Calu3 (cell line): ENCODE measurements at regions of chr7 and their contacts with region 1.

Region 1: GRCh38 chr7:126803060-126803665 is 449.6 kb downstream of the GRM8 start:
- DNase-seq: peak; percentile 73
- H3K4me3 Mint-ChIP-seq: no peak overlapping the region
- H3K27ac Mint-ChIP-seq: no peak overlapping the region
- H3K4me1 Mint-ChIP-seq: no peaks in the 10 kb centered on the region
- H3K27me3 Mint-ChIP-seq: peaks cover 32% of the 10 kb centered on the region
- CTCF ChIP-seq: peak; percentile 49

Region 2: DNA sequence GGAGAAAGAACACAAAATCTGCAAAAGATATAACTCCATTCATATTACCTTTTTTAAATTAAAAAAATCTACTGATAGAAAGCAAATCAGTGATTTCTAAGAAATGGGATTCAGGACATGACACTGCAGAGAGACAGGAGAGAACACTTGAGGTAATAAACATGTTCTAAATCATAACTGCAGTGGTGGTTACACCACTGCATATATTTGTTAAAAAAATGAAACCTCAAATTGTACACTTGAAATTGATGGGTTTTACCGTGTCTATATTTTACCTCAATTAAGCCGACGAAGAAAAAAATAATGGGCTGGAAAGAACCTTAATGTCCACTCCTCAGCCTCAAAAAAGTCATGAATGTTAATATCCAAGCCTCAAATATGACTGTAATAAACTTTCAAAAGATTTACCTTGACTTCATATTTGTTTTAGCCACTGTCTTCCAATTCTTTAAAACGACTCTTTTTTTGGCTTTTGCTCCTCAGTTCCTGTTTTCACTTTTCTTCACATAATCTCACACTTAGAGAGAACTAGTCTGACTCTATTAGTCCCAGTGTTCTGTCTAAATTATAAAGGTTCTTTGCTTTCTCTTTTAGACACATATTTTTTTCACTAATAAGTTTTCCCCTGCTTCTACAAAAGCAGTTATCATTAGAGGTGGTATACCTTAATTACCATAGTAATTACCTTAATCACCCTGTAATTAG is 52.8 kb before region 1 on chr7:
- CTCF ChIA-PET with region 1: no interaction called
- intact Hi-C with region 1: no loop called
- DNase-seq: no peak
- H3K4me3 Mint-ChIP-seq: no peak overlapping the region
- H3K27ac Mint-ChIP-seq: no peak overlapping the region
- H3K4me1 Mint-ChIP-seq: no peaks in the 10 kb centered on the region
- H3K27me3 Mint-ChIP-seq: no peaks in the 10 kb centered on the region
- CTCF ChIP-seq: no peak

Region 3: DNA sequence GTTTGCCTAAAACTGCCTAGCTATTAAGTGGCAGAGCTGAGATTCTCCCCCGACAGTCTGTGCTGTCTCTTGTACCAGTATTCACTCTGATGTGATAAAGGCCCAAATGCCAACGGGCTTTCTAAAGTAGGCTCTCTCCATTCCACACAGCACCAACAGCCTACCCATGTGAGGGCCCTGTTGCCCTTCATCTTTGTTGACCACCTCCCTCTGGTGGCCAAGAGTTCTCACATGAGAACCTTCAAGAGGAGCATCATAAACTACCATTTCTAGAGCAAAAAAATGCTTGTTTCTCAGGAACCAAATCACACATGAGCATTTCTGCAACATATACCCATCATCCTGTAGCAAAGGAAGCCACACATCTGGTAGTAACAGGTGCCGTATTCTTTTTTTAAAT is 263.8 kb after region 1 on chr7:
- CTCF ChIA-PET with region 1: interaction called, 8 read pairs
- intact Hi-C with region 1: loop called (anchors 1 kb)
- DNase-seq: peak; percentile 57
- H3K4me3 Mint-ChIP-seq: no peak overlapping the region
- H3K27ac Mint-ChIP-seq: no peak overlapping the region
- H3K4me1 Mint-ChIP-seq: no peaks in the 10 kb centered on the region
- H3K27me3 Mint-ChIP-seq: peaks cover 14% of the 10 kb centered on the region
- CTCF ChIP-seq: peak; percentile 48

Region 4: GRCh38 chr7:127158659-127159058 is 355.5 kb after region 1 on chr7:
- CTCF ChIA-PET with region 1: no interaction called
- intact Hi-C with region 1: loop called (anchors 2 kb)
- DNase-seq: no peak
- H3K4me3 Mint-ChIP-seq: no peak overlapping the region
- H3K27ac Mint-ChIP-seq: no peak overlapping the region
- H3K4me1 Mint-ChIP-seq: no peaks in the 10 kb centered on the region
- H3K27me3 Mint-ChIP-seq: peaks cover 44% of the 10 kb centered on the region
- CTCF ChIP-seq: peak; percentile 21

Region 5: GRCh38 chr7:127266047-127266446 is 462.9 kb after region 1 on chr7:
- CTCF ChIA-PET with region 1: no interaction called
- intact Hi-C with region 1: no loop called
- DNase-seq: no peak
- H3K4me3 Mint-ChIP-seq: no peak overlapping the region
- H3K27ac Mint-ChIP-seq: no peak overlapping the region
- H3K4me1 Mint-ChIP-seq: no peaks in the 10 kb centered on the region
- H3K27me3 Mint-ChIP-seq: peaks cover 81% of the 10 kb centered on the region
- CTCF ChIP-seq: no peak

Region 6: DNA sequence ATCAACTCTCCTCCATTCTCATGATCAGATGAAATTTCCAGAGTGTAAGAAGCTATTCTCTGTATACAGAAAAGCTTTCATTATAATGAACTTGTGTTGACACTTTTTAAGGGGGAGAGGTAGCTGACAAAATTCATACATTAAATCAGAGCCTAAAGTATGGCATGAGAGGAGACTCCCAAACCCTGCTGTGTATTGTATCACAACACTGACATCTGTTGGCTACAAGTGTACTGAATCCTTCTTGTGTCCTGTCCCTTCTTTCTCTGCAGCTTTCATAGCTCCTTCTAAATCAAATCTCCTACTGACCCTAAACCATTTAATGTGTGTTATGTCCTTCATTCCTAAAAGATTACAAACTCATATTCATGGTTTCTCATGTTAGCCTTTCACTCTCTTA is 711.3 kb after region 1 on chr7:
- CTCF ChIA-PET with region 1: interaction called, 3 read pairs
- intact Hi-C with region 1: loop called (anchors 10 kb)
- DNase-seq: peak; percentile 13
- H3K4me3 Mint-ChIP-seq: no peak overlapping the region
- H3K27ac Mint-ChIP-seq: no peak overlapping the region
- H3K4me1 Mint-ChIP-seq: no peaks in the 10 kb centered on the region
- H3K27me3 Mint-ChIP-seq: peaks cover 74% of the 10 kb centered on the region
- CTCF ChIP-seq: no peak